CD8-positive, alpha-beta memory T cell (primary cell): ENCODE measurements at regions of chr10 and their contacts with region 1.

Region 1: GRCh38 chr10:100524638-100525037 is 5.0 kb upstream of the SEC31B start:
- DNase-seq: no peak
- H3K4me3 ChIP-seq: no peak overlapping the region
- H3K4me3 Mint-ChIP-seq: peak overlapping the region in 1 of 7 donors; percentile 29
- H3K27ac ChIP-seq: no peak overlapping the region
- H3K27ac Mint-ChIP-seq: peak overlapping the region in 2 of 8 donors; percentile 70 to 73
- H3K4me1 ChIP-seq: peaks cover 29% of the 10 kb centered on the region
- H3K4me1 Mint-ChIP-seq: peaks cover 17 to 33% (median 32%) of the 10 kb centered on the region in 3 donors
- H3K27me3 ChIP-seq: no peaks in the 10 kb centered on the region
- H3K27me3 Mint-ChIP-seq: no peaks in the 10 kb centered on the region

Region 2: DNA sequence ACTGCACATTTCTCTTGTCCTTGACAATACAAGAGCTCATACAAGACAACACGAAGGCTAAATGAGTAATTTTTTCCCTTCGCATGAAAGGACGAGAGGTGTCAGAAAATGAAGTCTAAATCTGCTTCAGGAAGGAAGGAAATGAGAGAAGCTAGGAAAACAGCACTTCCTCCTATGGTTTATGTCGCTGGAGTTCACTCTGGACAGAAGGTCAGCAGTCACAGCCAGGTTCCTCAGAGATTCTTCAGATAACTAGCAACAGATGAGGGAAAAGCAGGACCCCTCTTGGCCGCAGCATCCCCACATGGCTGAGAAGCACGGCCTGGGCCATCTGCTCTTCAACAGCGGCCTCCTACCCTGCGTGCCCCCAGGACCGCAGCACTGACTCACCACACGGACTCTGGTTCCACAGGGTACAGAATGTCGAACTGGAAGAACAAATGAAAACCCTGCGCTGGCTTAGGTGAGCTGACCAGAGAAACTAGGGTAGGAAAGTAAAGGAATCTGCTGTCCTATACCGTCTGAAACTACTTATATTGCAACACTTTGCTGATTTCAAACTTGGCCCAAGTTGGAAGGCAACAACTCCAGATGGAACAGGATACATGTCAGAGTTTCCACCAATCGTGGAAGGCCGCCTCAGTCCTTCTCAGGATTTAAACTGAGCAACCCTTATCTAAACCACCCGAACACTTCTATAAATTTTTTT is 541.2 kb before region 1 on chr10:
- CTCF ChIA-PET with region 1: no interaction called
- POLR2A ChIA-PET with region 1: no interaction called
- DNase-seq: no peak
- H3K4me3 ChIP-seq: no peak overlapping the region
- H3K4me3 Mint-ChIP-seq: no peak overlapping the region
- H3K27ac ChIP-seq: peak overlapping the region; percentile 51
- H3K27ac Mint-ChIP-seq: no peak overlapping the region
- H3K4me1 ChIP-seq: no peaks in the 10 kb centered on the region
- H3K4me1 Mint-ChIP-seq: peaks cover 3 to 11% (median 4%) of the 10 kb centered on the region in 3 donors
- H3K27me3 ChIP-seq: no peaks in the 10 kb centered on the region
- H3K27me3 Mint-ChIP-seq: no peaks in the 10 kb centered on the region

Region 3: GRCh38 chr10:100446130-100446761 is 78.4 kb before region 1 on chr10:
- CTCF ChIA-PET with region 1: no interaction called
- POLR2A ChIA-PET with region 1: no interaction called
- DNase-seq: no peak
- H3K4me3 ChIP-seq: no peak overlapping the region
- H3K4me3 Mint-ChIP-seq: no peak overlapping the region
- H3K27ac ChIP-seq: no peak overlapping the region
- H3K27ac Mint-ChIP-seq: peak overlapping the region in 1 of 8 donors; percentile 6
- H3K4me1 ChIP-seq: no peaks in the 10 kb centered on the region
- H3K4me1 Mint-ChIP-seq: no peaks in the 10 kb centered on the region
- H3K27me3 ChIP-seq: no peaks in the 10 kb centered on the region
- H3K27me3 Mint-ChIP-seq: peaks cover 0 to 20% of the 10 kb centered on the region in 2 donors

Region 4: GRCh38 chr10:100508691-100509150 is 15.9 kb before region 1 on chr10:
- CTCF ChIA-PET with region 1: interaction called, 65 read pairs
- POLR2A ChIA-PET with region 1: interaction called, 3 read pairs
- DNase-seq: peak in 3 of 5 donors; percentile 56 to 73 (median 63)
- H3K4me3 ChIP-seq: no peak overlapping the region
- H3K4me3 Mint-ChIP-seq: peak overlapping the region; percentile 0 to 78 (median 71)
- H3K27ac ChIP-seq: no peak overlapping the region
- H3K27ac Mint-ChIP-seq: peak overlapping the region; percentile 65 to 97 (median 92)
- H3K4me1 ChIP-seq: peaks cover 50% of the 10 kb centered on the region
- H3K4me1 Mint-ChIP-seq: peaks cover 63 to 68% (median 63%) of the 10 kb centered on the region in 3 donors
- H3K27me3 ChIP-seq: no peaks in the 10 kb centered on the region
- H3K27me3 Mint-ChIP-seq: no peaks in the 10 kb centered on the region